Panc1 (cell line): ENCODE measurements at regions of chr19 and their contacts with region 1.

Region 1: DNA sequence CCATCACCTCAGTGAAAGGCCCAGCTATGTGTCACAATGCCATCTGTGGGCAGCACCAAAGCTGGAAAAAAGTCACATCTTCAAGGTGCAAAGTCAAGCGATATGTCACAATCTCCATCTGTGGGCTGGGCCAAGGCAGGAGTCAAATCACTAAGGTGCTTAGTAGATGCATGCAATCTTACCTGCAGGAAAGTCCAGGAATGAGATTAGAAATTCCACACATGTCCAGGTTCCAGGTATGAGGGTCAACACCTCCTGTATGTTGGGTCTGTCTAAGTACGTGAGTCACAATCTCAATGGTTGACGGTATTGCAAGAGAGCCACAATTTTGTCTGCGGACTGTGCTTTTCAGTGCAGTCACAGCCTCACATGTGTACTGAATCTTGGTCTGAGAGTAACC is 14.8 kb upstream of the ZNF43 start:
- DNase-seq: no peak
- ATAC-seq: no peak
- H3K4me3 ChIP-seq: peak overlapping the region; percentile 72 to 76
- H3K27ac ChIP-seq: peak overlapping the region; percentile 86
- H3K4me1 ChIP-seq: peaks cover 11% of the 10 kb centered on the region
- H3K27me3 ChIP-seq: no peaks in the 10 kb centered on the region
- CTCF ChIP-seq: no peak

Region 2: DNA sequence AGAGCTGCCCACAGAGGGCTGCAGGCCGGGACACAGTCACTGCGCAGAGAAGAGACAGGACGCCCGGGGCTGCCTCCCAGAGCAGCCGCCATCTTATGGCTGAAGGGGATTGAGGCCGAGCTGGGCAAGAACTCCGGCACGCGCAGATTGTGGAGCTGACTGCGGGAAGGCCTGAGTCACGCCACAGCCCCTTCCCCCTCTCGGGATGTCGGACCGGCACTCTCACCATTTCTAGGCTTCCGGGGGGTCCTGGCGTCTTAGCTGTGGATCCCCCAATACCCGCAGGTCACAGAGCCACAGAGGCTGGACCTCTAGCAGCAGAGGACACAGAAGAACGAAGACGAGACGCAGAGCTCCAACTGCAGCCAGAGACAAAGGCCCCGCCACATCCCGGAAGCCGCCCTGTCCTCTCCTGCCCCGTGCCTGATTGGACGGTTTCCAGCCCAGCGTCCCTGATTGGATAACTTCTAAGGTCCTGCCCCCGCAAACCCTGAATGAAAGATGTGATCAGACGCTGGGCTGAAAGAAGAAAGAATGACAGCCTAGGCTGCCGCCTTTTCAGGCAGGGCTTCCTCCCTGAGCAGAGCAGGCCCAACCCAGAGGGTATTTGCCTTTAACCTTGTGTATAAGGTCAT is 14.8 kb before region 1 on chr19 and contains the start of gene ZNF43:
- CTCF ChIA-PET with region 1: interaction called, 12 read pairs
- POLR2A ChIA-PET with region 1: interaction called, 7 read pairs
- in situ Hi-C with region 1: no loop called
- intact Hi-C with region 1: no loop called
- DNase-seq: peak; percentile 69
- ATAC-seq: peak; percentile 97
- H3K4me3 ChIP-seq: peak within 1 kb of the TSS; percentile 85 to 86
- H3K27ac ChIP-seq: peak within 1 kb of the TSS; percentile 90
- H3K4me1 ChIP-seq: peaks cover 4% of the 10 kb centered on the region; the same call in 1 of the 2 replicates
- H3K27me3 ChIP-seq: no peaks in the 10 kb centered on the region
- CTCF ChIP-seq: no peak
- total RNA-seq, gene ZNF43: 27.7 TPM